ENCODE measurements at regions of chr14 and their contacts with region 1.

Region 1: GRCh38 chr14:92585981-92586937 is 72.7 kb downstream of the RIN3 start:
- DNase-seq: no peak
- ATAC-seq: no peak
- H3K4me3 ChIP-seq: no peak overlapping the region
- H3K4me3 Mint-ChIP-seq: peak overlapping the region; percentile 20
- H3K27ac ChIP-seq: peak overlapping the region in 1 of 2 donors; percentile 5
- H3K27ac Mint-ChIP-seq: peak overlapping the region; percentile 72
- H3K4me1 ChIP-seq: peaks cover 61 to 74% of the 10 kb centered on the region in 2 donors
- H3K4me1 Mint-ChIP-seq: peaks cover 77% of the 10 kb centered on the region
- H3K27me3 ChIP-seq: no peaks in the 10 kb centered on the region
- H3K27me3 Mint-ChIP-seq: no peaks in the 10 kb centered on the region
- CTCF ChIP-seq: no peak

Region 2: DNA sequence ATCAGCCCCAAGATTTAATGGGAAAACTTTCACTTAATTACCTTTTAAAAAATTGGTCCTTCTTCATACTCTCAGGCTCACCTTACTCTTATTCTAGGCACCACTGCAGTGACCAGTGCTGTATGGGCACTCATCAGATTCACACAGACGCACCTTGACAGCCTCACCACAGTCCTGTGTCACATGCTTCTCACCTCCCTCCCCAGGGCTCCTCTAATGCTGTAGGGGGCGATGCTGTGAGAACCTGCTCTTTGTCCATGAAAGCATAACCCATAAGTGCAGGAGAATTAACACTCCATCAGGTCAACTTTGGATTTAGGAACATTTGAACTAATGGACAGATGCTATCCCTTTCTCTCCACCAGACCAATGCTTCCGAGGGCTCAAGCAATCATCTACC is 1062.3 kb before region 1 on chr14:
- CTCF ChIA-PET with region 1: no interaction called
- POLR2A ChIA-PET with region 1: no interaction called
- intact Hi-C with region 1: no loop called
- DNase-seq: no peak
- ATAC-seq: no peak
- H3K4me3 ChIP-seq: no peak overlapping the region
- H3K4me3 Mint-ChIP-seq: no peak overlapping the region
- H3K27ac ChIP-seq: no peak overlapping the region
- H3K27ac Mint-ChIP-seq: no peak overlapping the region
- H3K4me1 ChIP-seq: no peaks in the 10 kb centered on the region
- H3K4me1 Mint-ChIP-seq: no peaks in the 10 kb centered on the region
- H3K27me3 ChIP-seq: no peaks in the 10 kb centered on the region
- H3K27me3 Mint-ChIP-seq: peaks cover 5% of the 10 kb centered on the region
- CTCF ChIP-seq: no peak

Region 3: GRCh38 chr14:92495035-92495434 is 91.2 kb before region 1 on chr14:
- CTCF ChIA-PET with region 1: no interaction called
- POLR2A ChIA-PET with region 1: no interaction called
- intact Hi-C with region 1: no loop called
- DNase-seq: no peak
- ATAC-seq: no peak
- H3K4me3 ChIP-seq: no peak overlapping the region
- H3K4me3 Mint-ChIP-seq: no peak overlapping the region
- H3K27ac ChIP-seq: no peak overlapping the region
- H3K27ac Mint-ChIP-seq: peak overlapping the region; percentile 10
- H3K4me1 ChIP-seq: peaks cover 0 to 4% of the 10 kb centered on the region in 2 donors
- H3K4me1 Mint-ChIP-seq: peaks cover 4% of the 10 kb centered on the region
- H3K27me3 ChIP-seq: no peaks in the 10 kb centered on the region
- H3K27me3 Mint-ChIP-seq: peaks cover 7% of the 10 kb centered on the region
- CTCF ChIP-seq: no peak

Region 4: GRCh38 chr14:92531106-92531873 is 55.0 kb before region 1 on chr14:
- CTCF ChIA-PET with region 1: no interaction called
- POLR2A ChIA-PET with region 1: no interaction called
- intact Hi-C with region 1: no loop called
- DNase-seq: peak; percentile 63
- ATAC-seq: peak; percentile 89
- H3K4me3 ChIP-seq: no peak overlapping the region
- H3K4me3 Mint-ChIP-seq: peak overlapping the region; percentile 35
- H3K27ac ChIP-seq: peak overlapping the region; percentile 15 to 61
- H3K27ac Mint-ChIP-seq: peak overlapping the region; percentile 80
- H3K4me1 ChIP-seq: peaks cover 20 to 32% of the 10 kb centered on the region in 2 donors
- H3K4me1 Mint-ChIP-seq: peaks cover 44% of the 10 kb centered on the region
- H3K27me3 ChIP-seq: no peaks in the 10 kb centered on the region
- H3K27me3 Mint-ChIP-seq: no peaks in the 10 kb centered on the region
- CTCF ChIP-seq: no peak

Region 5: GRCh38 chr14:92556255-92556741 is 30.0 kb before region 1 on chr14:
- CTCF ChIA-PET with region 1: interaction called, 11 read pairs
- POLR2A ChIA-PET with region 1: no interaction called
- intact Hi-C with region 1: no loop called
- DNase-seq: no peak
- ATAC-seq: peak; percentile 8
- H3K4me3 ChIP-seq: no peak overlapping the region
- H3K4me3 Mint-ChIP-seq: peak overlapping the region; percentile 70
- H3K27ac ChIP-seq: no peak overlapping the region
- H3K27ac Mint-ChIP-seq: peak overlapping the region; percentile 22
- H3K4me1 ChIP-seq: peaks cover 39% of the 10 kb centered on the region in 2 donors
- H3K4me1 Mint-ChIP-seq: peaks cover 39% of the 10 kb centered on the region
- H3K27me3 ChIP-seq: peaks cover 0 to 17% (median 6%) of the 10 kb centered on the region in 4 experiments
- H3K27me3 Mint-ChIP-seq: peaks cover 20% of the 10 kb centered on the region
- CTCF ChIP-seq: no peak

Region 6: GRCh38 chr14:92600318-92601053 is 14.2 kb after region 1 on chr14:
- CTCF ChIA-PET with region 1: interaction called, 11 read pairs
- POLR2A ChIA-PET with region 1: no interaction called
- intact Hi-C with region 1: no loop called
- DNase-seq: no peak
- ATAC-seq: no peak
- H3K4me3 ChIP-seq: no peak overlapping the region
- H3K4me3 Mint-ChIP-seq: no peak overlapping the region
- H3K27ac ChIP-seq: no peak overlapping the region
- H3K27ac Mint-ChIP-seq: peak overlapping the region; percentile 2
- H3K4me1 ChIP-seq: peaks cover 0 to 13% of the 10 kb centered on the region in 2 donors
- H3K4me1 Mint-ChIP-seq: peaks cover 38% of the 10 kb centered on the region
- H3K27me3 ChIP-seq: no peaks in the 10 kb centered on the region
- H3K27me3 Mint-ChIP-seq: no peaks in the 10 kb centered on the region
- CTCF ChIP-seq: no peak

Region 7: GRCh38 chr14:92651106-92651757 is 65.0 kb after region 1 on chr14:
- CTCF ChIA-PET with region 1: interaction called, 21 read pairs
- POLR2A ChIA-PET with region 1: no interaction called
- intact Hi-C with region 1: loop called (anchors 2 kb)
- DNase-seq: peak; percentile 89
- ATAC-seq: peak; percentile 74
- H3K4me3 ChIP-seq: peak overlapping the region; percentile 1 to 91 (median 80)
- H3K4me3 Mint-ChIP-seq: peak overlapping the region; percentile 100
- H3K27ac ChIP-seq: peak overlapping the region; percentile 82 to 92
- H3K27ac Mint-ChIP-seq: peak overlapping the region; percentile 97
- H3K4me1 ChIP-seq: peaks cover 50 to 85% of the 10 kb centered on the region in 2 donors
- H3K4me1 Mint-ChIP-seq: peaks cover 71% of the 10 kb centered on the region
- H3K27me3 ChIP-seq: no peaks in the 10 kb centered on the region
- H3K27me3 Mint-ChIP-seq: no peaks in the 10 kb centered on the region
- CTCF ChIP-seq: no peak

Region 8: GRCh38 chr14:92686900-92687444 is 100.7 kb after region 1 on chr14:
- CTCF ChIA-PET with region 1: interaction called, 94 read pairs
- POLR2A ChIA-PET with region 1: interaction called, 4 read pairs
- intact Hi-C with region 1: no loop called
- DNase-seq: peak; percentile 35
- ATAC-seq: peak; percentile 82
- H3K4me3 ChIP-seq: no peak overlapping the region
- H3K4me3 Mint-ChIP-seq: no peak overlapping the region
- H3K27ac ChIP-seq: peak overlapping the region in 1 of 2 donors; percentile 56
- H3K27ac Mint-ChIP-seq: no peak overlapping the region
- H3K4me1 ChIP-seq: no peaks in the 10 kb centered on the region
- H3K4me1 Mint-ChIP-seq: peaks cover 2% of the 10 kb centered on the region
- H3K27me3 ChIP-seq: no peaks in the 10 kb centered on the region
- H3K27me3 Mint-ChIP-seq: no peaks in the 10 kb centered on the region
- CTCF ChIP-seq: peak; percentile 98

Region 9: DNA sequence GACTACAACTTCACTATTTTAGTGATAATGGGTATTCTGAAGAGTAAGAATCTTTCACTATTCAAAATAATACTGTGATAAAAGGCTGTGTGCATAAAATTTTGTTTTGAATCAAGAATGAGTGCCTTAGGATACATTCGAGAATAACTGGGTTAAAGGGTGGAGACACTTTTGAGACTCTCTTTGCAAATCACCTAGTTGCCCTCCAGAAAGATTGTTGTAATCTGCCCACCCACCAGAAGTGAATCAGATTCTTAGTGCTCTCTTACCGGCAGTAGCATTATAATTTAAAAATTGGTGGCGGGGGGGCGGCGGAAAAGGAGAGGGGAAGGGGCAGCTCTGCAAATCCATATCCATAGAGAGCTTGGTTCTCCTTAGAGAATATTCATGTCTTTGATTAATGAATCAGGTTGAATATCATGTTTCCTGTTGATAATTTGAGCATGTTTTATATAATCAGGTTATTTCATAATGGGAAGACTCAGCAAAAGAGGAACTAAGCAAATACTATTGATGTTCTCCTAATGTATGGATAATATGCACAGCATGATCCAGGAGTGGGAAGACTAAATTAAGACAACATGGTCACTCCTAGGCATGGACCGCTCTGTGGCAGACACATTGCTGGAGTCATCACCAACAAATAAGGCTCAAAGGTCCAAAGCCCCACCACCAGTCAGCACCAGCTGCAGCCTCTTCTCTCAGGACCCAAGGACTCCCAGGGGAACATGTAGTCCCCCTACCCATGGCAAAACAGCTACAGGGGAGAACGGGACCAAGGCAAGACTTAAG is 274.0 kb after region 1 on chr14:
- CTCF ChIA-PET with region 1: no interaction called
- POLR2A ChIA-PET with region 1: no interaction called
- intact Hi-C with region 1: no loop called
- DNase-seq: no peak
- ATAC-seq: no peak
- H3K4me3 ChIP-seq: no peak overlapping the region
- H3K4me3 Mint-ChIP-seq: no peak overlapping the region
- H3K27ac ChIP-seq: no peak overlapping the region
- H3K27ac Mint-ChIP-seq: no peak overlapping the region
- H3K4me1 ChIP-seq: no peaks in the 10 kb centered on the region
- H3K4me1 Mint-ChIP-seq: no peaks in the 10 kb centered on the region
- H3K27me3 ChIP-seq: no peaks in the 10 kb centered on the region
- H3K27me3 Mint-ChIP-seq: peaks cover 8% of the 10 kb centered on the region
- CTCF ChIP-seq: no peak

Measured in B cell (primary cell).